H1 (cell line): ENCODE measurements at regions of chr1 and their contacts with region 1.

Region 1: GRCh38 chr1:99969729-99970621 is at the start of gene SLC35A3:
- DNase-seq: peak; percentile 65 to 94
- H3K4me3 ChIP-seq: peak within 1 kb of the TSS; percentile 81 to 87 (median 82)
- H3K27ac ChIP-seq: peak within 1 kb of the TSS; percentile 74
- H3K4me1 ChIP-seq: peaks cover 0 to 8% (median 3%) of the 10 kb centered on the region in 4 experiments; a peak in 4 of 7 replicates
- H3K27me3 ChIP-seq: no peaks in the 10 kb centered on the region
- CTCF ChIP-seq: 0 out of 4 replicates have a peak, but pooled peaks of 1 of the 3 experiments have one; percentile 4
- EP300 ChIP-seq: 0 out of 3 replicates have a peak, but pooled peaks of 1 of the 2 experiments have one; percentile 50
- POLR2A ChIP-seq: no peak; a peak in 1 of 3 replicates
- RAD21 ChIP-seq: peak in 1 of 2 experiments; percentile 19; a peak in 2 of 4 replicates
- total RNA-seq, gene SLC35A3: 12.5 and 13.8 TPM in 2 replicates

Region 2: GRCh38 chr1:99849744-99850458 is 120.1 kb before region 1 on chr1 and contains the start of gene AGL:
- CTCF ChIA-PET with region 1: no interaction called
- POLR2A ChIA-PET with region 1: interaction called, 14 read pairs
- DNase-seq: peak; percentile 64 to 94
- H3K4me3 ChIP-seq: peak within 1 kb of the TSS; percentile 75 to 94 (median 84)
- H3K27ac ChIP-seq: peak within 1 kb of the TSS; percentile 84; the same call in 1 of the 2 replicates
- H3K4me1 ChIP-seq: peaks cover 3 to 6% (median 4%) of the 10 kb centered on the region in 4 experiments; a peak in 6 of 7 replicates
- H3K27me3 ChIP-seq: no peaks in the 10 kb centered on the region
- CTCF ChIP-seq: no peak
- EP300 ChIP-seq: no peak
- POLR2A ChIP-seq: peak; percentile 71 to 94
- RAD21 ChIP-seq: 0 out of 4 replicates have a peak, but pooled peaks of 1 of the 2 experiments have one; percentile 4
- total RNA-seq, gene AGL: 19.2 and 19.3 TPM in 2 replicates

Region 3: GRCh38 chr1:99956755-99957154 is 13.2 kb before region 1 on chr1:
- CTCF ChIA-PET with region 1: interaction called, 6 read pairs
- POLR2A ChIA-PET with region 1: interaction called, 17 read pairs
- DNase-seq: no peak
- H3K4me3 ChIP-seq: no peak overlapping the region
- H3K27ac ChIP-seq: no peak overlapping the region
- H3K4me1 ChIP-seq: peaks cover 0 to 4% (median 2%) of the 10 kb centered on the region in 4 experiments; a peak in 3 of 7 replicates
- H3K27me3 ChIP-seq: no peaks in the 10 kb centered on the region
- CTCF ChIP-seq: no peak
- EP300 ChIP-seq: no peak
- POLR2A ChIP-seq: no peak
- RAD21 ChIP-seq: no peak